Activated CD4-positive, alpha-beta T cell treated with anti-CD3 and anti-CD28 coated beads for 36 hours (primary cell): ENCODE measurements at regions of chr6 and their contacts with region 1.

Region 1: DNA sequence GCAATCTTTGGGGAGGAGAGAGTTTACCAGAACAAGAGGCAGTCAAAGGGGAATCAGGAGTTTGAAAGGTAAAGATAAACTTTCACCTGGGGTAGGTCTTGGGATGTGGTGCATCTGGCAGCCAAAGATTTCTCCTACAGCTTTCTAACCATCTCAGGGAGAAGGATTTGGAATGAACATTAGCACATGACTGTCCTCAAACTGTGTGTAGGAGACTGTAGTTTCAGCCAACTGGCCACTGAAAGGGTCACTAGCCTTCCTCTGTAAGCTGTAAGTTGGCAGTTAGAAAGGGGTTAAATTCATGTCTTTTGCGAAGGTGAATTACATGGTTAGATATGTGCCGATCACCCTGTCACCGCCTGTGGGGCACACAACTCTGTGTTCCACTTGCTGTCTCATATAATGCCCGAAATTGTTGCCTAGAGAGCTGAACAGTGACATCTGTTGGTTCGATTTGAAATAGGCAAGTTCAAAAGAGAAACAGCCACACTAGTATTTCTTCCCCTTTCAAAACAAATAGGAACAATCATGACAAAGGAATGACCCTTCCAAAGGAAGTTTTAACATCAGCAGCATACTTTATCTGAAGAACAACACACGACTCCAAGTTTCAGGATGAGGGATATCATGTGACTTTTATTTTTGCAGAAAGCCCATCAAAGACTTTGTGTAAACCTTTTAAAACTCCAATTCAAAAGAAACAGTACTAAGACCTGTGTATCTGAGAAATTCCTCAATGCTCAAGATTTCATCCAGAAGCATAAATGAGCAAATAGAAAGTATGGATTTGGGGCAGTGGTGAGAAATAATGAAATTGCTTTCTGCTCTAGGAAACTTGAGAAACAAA is 1.1 kb upstream of the OPN5 start:
- DNase-seq: peak; percentile 65
- ATAC-seq: peak; percentile 98
- H3K4me3 Mint-ChIP-seq: no peak overlapping the region
- H3K27ac Mint-ChIP-seq: no peak overlapping the region
- H3K4me1 Mint-ChIP-seq: peaks cover 5% of the 10 kb centered on the region
- H3K27me3 Mint-ChIP-seq: peaks cover 3% of the 10 kb centered on the region

Region 2: GRCh38 chr6:47733879-47734558 is 46.7 kb before region 1 on chr6:
- CTCF ChIA-PET with region 1: interaction called, 10 read pairs
- POLR2A ChIA-PET with region 1: no interaction called
- intact Hi-C with region 1: loop called in 1 of 2 experiments (anchors 2 kb)
- DNase-seq: no peak
- ATAC-seq: no peak
- H3K4me3 Mint-ChIP-seq: no peak overlapping the region
- H3K27ac Mint-ChIP-seq: no peak overlapping the region
- H3K4me1 Mint-ChIP-seq: peaks cover 7% of the 10 kb centered on the region
- H3K27me3 Mint-ChIP-seq: peaks cover 13% of the 10 kb centered on the region